Heart left ventricle (tissue), 16 donors: ENCODE measurements at regions of chr17 and their contacts with region 1.

Region 1: GRCh38 chr17:66146399-66146798 is 45.5 kb downstream of the CEP112 start:
- DNase-seq: no peak
- ATAC-seq: no peak
- H3K4me3 ChIP-seq: no peak overlapping the region
- H3K27ac ChIP-seq: no peak overlapping the region
- H3K4me1 ChIP-seq: no peaks in the 10 kb centered on the region
- H3K27me3 ChIP-seq: no peaks in the 10 kb centered on the region
- CTCF ChIP-seq: no peak
- POLR2A ChIP-seq: no peak

Region 2: DNA sequence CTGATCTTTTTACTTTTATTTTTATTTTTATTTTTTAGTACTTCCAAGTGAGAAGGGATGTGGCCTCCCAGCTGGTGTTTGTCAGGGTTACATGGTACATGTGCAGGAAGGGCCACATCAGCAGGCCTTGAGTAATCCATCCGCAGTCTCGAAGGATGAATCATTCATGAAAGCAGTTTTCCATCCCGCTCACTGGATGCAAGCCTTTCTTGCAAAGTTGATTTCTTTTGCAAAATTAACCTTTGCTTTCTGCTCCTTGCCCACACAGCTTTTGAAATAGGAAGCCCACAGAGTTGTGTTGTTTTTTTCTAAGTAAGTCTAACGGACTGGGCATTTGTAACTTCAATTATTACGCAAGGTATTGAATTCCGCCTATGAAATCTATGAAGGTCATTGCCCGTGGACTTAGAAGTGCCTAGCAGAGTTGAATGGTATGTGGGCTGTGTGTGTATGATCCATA is 313.4 kb after region 1 on chr17:
- intact Hi-C with region 1: loop called in 1 of 10 experiments (anchors 5 kb)
- DNase-seq: peak in 4 of 5 donors; percentile 33 to 69 (median 49)
- ATAC-seq: peak in 3 of 4 donors; percentile 89 to 98 (median 94)
- H3K4me3 ChIP-seq: no peak overlapping the region
- H3K27ac ChIP-seq: peak overlapping the region in 10 of 12 donors; percentile 1 to 84 (median 45)
- H3K4me1 ChIP-seq: peaks cover 0 to 40% (median 0%) of the 10 kb centered on the region in 12 donors
- H3K27me3 ChIP-seq: no peaks in the 10 kb centered on the region
- CTCF ChIP-seq: no peak
- POLR2A ChIP-seq: no peak